Posterior cingulate gyrus (tissue), 11 donors: ENCODE measurements at regions of chr18 and their contacts with region 1.

Region 1: DNA sequence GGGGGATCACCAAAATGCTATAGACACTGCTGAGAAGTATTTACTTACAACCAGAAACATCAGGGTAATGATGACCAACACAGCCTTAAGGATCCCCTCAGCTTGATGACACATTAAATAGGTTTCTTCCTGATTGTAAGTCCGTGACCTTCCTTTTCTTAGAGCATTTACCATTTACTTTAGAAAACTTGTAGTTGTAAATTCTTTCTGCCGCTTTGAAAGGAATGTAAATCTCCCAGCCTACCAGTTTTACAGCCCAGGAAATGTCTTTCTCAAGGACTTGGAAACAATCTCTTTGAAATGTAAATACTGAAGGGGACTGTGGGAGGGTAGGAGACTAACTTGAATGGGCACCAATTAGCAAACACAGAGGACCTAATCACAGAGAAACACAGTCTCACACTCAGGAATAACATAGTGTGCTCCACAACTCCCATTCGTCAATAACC is 278.6 kb downstream of the DSC3 start:
- DNase-seq: no peak

Region 2: DNA sequence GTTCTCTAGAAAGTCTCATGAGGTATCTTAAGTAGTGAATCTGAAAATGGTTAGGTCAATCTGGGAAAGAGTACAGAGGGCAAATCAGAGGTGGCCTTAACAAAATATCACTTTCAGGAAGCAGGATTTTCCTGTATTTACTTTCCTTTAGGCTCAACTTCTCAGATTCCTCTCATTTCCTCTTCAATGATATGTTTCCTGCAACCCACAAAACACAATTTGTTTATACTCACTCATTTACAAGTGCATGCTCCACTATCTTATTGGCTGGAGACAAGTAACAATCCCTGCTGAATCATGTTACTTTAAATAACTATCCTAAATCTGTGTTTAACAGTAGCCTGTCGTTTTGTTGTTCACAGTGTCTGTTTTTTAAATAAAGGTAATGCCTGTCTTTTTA is 50.5 kb after region 1 on chr18:
- intact Hi-C with region 1: no loop called
- DNase-seq: no peak

Region 3: DNA sequence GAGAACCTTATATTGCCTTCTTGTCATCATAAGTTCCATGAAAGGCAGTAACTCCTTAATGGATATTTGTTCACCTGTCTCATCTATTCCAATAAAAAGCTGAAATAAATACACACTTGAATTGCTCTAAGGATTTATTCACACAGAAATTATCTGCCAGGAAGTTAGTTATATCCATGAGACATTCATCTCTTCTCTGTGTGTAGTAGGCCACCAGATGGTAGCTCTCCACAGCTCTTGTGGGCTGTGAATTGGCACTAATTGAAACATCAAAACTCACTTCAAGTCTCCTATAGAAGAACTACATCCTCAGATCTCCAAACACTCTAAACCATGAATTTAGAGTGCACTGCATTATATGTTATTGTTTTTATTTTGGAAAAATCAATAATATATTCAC is 89.1 kb after region 1 on chr18:
- intact Hi-C with region 1: loop called (anchors 10 kb)
- DNase-seq: peak in 1 of 10 donors; percentile 3